HCT116 (cell line): ENCODE measurements at regions of chr17 and their contacts with region 1.

Region 1: GRCh38 chr17:50865984-50866774 is at the start of gene TOB1:
- DNase-seq: peak; percentile 96
- ATAC-seq: peak; percentile 81
- H3K4me3 ChIP-seq: peak within 1 kb of the TSS; percentile 70 to 83
- H3K27ac ChIP-seq: peak within 1 kb of the TSS; percentile 92
- H3K4me1 ChIP-seq: peaks cover 17 to 36% of the 10 kb centered on the region in 2 experiments
- H3K27me3 ChIP-seq: no peaks in the 10 kb centered on the region
- CTCF ChIP-seq: no peak
- POLR2A ChIP-seq: peak; percentile 99
- RAD21 ChIP-seq: no peak
- total RNA-seq, gene TOB1: 86.0 TPM

Region 2: DNA sequence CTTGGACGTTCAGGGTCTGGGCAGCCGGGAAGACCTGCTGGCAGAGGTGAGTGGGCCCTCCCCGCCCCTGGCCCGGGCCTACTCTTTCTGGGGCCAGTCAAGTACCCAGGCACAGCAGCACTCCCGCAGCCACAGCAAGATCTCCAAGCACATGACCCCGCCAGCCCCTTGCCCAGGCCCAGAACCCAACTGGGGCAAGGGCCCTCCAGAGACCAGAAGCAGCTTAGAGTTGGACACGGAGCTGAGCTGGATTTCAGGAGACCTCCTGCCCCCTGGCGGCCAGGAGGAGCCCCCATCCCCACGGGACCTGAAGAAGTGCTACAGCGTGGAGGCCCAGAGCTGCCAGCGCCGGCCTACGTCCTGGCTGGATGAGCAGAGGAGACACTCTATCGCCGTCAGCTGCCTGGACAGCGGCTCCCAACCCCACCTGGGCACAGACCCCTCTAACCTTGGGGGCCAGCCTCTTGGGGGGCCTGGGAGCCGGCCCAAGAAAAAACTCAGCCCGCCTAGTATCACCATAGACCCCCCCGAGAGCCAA is 240.1 kb before region 1 on chr17:
- CTCF ChIA-PET with region 1: no interaction called
- POLR2A ChIA-PET with region 1: no interaction called
- RAD21 ChIA-PET with region 1: no interaction called
- intact Hi-C with region 1: loop called (anchors 10 kb)
- DNase-seq: peak; percentile 58
- ATAC-seq: peak; percentile 81
- H3K4me3 ChIP-seq: no peak overlapping the region
- H3K27ac ChIP-seq: peak overlapping the region; percentile 9; the same call in 1 of the 2 replicates
- H3K4me1 ChIP-seq: peaks cover 9 to 32% of the 10 kb centered on the region in 2 experiments; a peak in 3 of 4 replicates
- H3K27me3 ChIP-seq: no peaks in the 10 kb centered on the region
- CTCF ChIP-seq: peak; percentile 90 to 96 (median 92)
- POLR2A ChIP-seq: no peak
- RAD21 ChIP-seq: peak; percentile 92

Region 3: DNA sequence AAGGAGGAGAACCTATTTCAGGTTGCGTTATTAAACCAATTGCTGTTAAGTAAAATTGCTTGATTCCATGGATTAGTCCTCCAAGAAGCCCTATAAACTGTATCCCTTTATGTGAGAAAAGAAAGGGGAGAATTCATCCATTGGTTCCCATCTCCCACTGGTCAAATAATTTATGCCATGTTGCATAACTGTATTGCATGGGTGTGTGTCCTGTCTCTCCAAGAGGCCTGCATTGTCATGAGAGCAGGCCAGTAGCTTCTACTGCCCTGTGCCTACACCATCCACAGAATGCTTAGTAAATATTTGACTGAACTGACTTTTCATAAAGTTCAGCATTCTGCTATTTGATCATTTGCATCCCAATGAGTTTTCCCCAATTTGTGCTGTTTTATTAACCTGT is 11.7 kb after region 1 on chr17:
- CTCF ChIA-PET with region 1: interaction called, 5 read pairs
- POLR2A ChIA-PET with region 1: interaction called, 29 read pairs
- RAD21 ChIA-PET with region 1: no interaction called
- intact Hi-C with region 1: no loop called
- DNase-seq: no peak
- ATAC-seq: no peak
- H3K4me3 ChIP-seq: no peak overlapping the region
- H3K27ac ChIP-seq: no peak overlapping the region
- H3K4me1 ChIP-seq: peaks cover 4 to 9% of the 10 kb centered on the region in 2 experiments; a peak in 3 of 4 replicates
- H3K27me3 ChIP-seq: no peaks in the 10 kb centered on the region
- CTCF ChIP-seq: no peak
- POLR2A ChIP-seq: no peak
- RAD21 ChIP-seq: no peak

Region 4: DNA sequence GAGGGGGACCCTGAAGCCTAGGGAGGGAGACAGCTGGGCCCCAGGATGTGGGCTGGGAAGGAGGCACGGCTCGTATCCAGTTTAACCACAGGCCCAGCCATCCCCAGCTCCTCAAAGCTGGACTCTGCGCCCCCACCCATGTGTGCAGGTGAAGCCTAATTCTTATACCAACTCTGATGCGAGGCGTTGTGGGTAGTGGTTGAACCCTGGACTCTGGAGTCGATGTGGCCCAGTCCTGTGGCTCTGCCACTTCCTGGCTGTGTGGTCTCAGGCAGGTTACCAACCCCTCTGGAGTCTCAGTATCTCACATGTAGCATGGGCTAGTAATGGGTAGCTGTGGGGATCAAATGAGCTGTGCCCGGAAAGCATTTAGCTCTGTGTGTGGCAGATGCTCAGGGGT is 60.3 kb after region 1 on chr17:
- CTCF ChIA-PET with region 1: no interaction called
- POLR2A ChIA-PET with region 1: interaction called, 10 read pairs
- RAD21 ChIA-PET with region 1: no interaction called
- intact Hi-C with region 1: no loop called
- DNase-seq: no peak
- ATAC-seq: no peak
- H3K4me3 ChIP-seq: no peak overlapping the region
- H3K27ac ChIP-seq: no peak overlapping the region
- H3K4me1 ChIP-seq: peaks cover 0 to 13% of the 10 kb centered on the region in 2 experiments; a peak in 2 of 4 replicates
- H3K27me3 ChIP-seq: no peaks in the 10 kb centered on the region
- CTCF ChIP-seq: no peak
- POLR2A ChIP-seq: no peak
- RAD21 ChIP-seq: no peak

Region 5: DNA sequence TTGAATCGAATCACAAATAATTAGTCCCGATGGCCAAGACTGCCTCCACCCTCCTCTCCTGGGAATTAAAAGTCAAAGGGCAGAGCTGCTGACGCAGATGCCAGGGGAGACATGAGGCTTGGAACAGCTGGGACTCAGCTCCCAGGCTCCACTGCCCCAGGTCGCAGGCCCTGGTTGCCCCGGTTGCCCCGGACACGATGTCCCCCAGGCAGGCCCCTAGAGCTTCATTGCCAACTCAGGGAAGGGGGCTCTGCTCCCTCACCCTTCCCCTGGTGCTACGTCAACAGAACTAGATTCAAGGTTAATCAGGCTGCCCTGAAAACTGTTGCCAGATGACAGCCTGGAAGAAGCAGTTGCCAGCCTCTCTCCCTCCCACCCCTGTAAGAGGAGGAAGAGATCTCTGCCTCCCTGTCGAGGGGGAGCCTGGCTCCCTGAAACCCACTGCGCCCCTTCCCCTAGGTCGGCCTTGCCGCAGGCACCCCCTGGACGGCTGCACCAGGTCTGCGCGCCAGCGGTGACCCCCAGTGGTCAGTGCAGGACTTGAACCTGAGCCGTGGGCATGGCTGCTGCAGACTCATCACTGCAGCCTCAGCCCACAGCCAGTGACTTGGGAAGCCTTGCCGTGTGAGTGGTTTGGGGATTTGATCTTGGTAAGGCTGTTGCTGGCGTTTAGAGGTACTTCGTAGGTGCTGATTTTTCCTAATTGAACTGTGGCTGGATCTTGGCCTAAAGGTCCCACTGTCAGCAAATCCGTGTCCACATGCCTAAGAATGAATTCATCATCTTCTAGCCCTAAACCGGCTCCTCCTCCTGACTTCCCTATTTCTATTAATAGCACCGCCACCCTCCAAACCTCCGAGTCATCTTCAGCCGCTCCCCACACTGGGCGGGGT is 84.1 kb after region 1 on chr17:
- CTCF ChIA-PET with region 1: interaction called, 16 read pairs
- POLR2A ChIA-PET with region 1: interaction called, 88 read pairs
- RAD21 ChIA-PET with region 1: interaction called, 4 to 5 read pairs
- intact Hi-C with region 1: loop called (anchors 1 kb)
- DNase-seq: peak; percentile 88
- ATAC-seq: peak; percentile 87
- H3K4me3 ChIP-seq: peak overlapping the region; percentile 29 to 42
- H3K27ac ChIP-seq: peak overlapping the region; percentile 79
- H3K4me1 ChIP-seq: peaks cover 74 to 97% of the 10 kb centered on the region in 2 experiments
- H3K27me3 ChIP-seq: no peaks in the 10 kb centered on the region
- CTCF ChIP-seq: peak; percentile 86 to 99 (median 97)
- POLR2A ChIP-seq: no peak
- RAD21 ChIP-seq: peak; percentile 100

Region 6: DNA sequence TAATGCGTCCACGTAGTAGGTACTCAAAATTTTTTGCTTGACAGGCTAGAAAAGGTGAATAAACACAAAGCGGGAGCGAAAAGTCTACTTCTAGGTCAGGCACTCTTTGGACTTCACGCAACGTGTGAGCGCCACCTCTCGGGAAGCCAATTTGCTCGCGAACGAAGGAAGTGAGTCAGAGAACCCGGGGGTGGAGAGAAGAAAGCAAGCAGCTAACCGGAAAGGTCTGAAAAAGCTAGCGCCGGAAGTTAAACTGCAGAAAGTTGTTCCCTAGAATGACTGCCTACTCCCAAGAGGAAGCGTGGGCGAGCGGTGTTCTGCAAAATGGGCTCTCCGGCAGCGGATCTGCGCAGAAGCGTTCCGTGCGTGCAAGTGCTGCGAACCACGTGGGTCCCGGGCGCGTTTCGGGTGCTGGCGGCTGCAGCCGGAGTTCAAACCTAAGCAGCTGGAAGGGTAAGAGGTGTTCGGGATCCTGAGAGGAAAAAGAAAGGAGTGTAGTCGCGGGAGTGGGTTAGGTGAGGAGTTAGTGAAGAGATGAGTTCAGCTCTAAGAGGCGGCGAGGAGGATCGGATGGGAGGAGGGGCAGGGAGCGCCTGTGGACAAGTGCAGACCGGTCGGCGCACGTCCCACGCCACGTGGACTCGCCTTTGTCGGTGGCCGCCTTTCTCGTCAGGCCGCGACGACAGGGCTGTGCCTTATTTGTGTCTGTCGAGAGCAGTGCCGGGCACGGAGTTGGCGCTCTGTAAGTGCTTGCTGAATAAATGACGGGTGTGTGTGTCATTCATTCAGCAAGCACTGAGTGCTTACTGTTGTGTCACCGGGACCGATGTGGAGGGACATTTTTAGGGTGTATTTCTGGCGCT is 287.3 kb after region 1 on chr17 and contains the start of gene NME1:
- CTCF ChIA-PET with region 1: interaction called, 7 read pairs
- POLR2A ChIA-PET with region 1: interaction called, 5 read pairs
- RAD21 ChIA-PET with region 1: no interaction called
- intact Hi-C with region 1: loop called (anchors 5 kb)
- DNase-seq: peak; percentile 100
- ATAC-seq: peak; percentile 92
- H3K4me3 ChIP-seq: peak within 1 kb of the TSS; percentile 74 to 82
- H3K27ac ChIP-seq: peak within 1 kb of the TSS; percentile 69
- H3K4me1 ChIP-seq: peaks cover 14 to 22% of the 10 kb centered on the region in 2 experiments
- H3K27me3 ChIP-seq: no peaks in the 10 kb centered on the region
- CTCF ChIP-seq: peak; percentile 97 to 100 (median 98)
- POLR2A ChIP-seq: peak; percentile 78
- RAD21 ChIP-seq: peak; percentile 100
- total RNA-seq, gene NME1: 510 TPM